B cell (primary cell): ENCODE measurements at regions of chr12 and their contacts with region 1.

Region 1: GRCh38 chr12:53500776-53501614 is at the start of gene TARBP2:
- DNase-seq: peak; percentile 99
- ATAC-seq: peak; percentile 79
- H3K4me3 ChIP-seq: peak within 1 kb of the TSS; percentile 65 to 94 (median 76)
- H3K4me3 Mint-ChIP-seq: peak within 1 kb of the TSS; percentile 92
- H3K27ac ChIP-seq: peak within 1 kb of the TSS; percentile 95 to 97
- H3K27ac Mint-ChIP-seq: peak within 1 kb of the TSS; percentile 97
- H3K4me1 ChIP-seq: peaks cover 22 to 28% of the 10 kb centered on the region in 2 donors
- H3K4me1 Mint-ChIP-seq: peaks cover 29% of the 10 kb centered on the region
- H3K27me3 ChIP-seq: no peaks in the 10 kb centered on the region
- H3K27me3 Mint-ChIP-seq: no peaks in the 10 kb centered on the region
- CTCF ChIP-seq: no peak
- total RNA-seq, gene TARBP2: 36.3 and 41.6 TPM in 2 replicates

Region 2: DNA sequence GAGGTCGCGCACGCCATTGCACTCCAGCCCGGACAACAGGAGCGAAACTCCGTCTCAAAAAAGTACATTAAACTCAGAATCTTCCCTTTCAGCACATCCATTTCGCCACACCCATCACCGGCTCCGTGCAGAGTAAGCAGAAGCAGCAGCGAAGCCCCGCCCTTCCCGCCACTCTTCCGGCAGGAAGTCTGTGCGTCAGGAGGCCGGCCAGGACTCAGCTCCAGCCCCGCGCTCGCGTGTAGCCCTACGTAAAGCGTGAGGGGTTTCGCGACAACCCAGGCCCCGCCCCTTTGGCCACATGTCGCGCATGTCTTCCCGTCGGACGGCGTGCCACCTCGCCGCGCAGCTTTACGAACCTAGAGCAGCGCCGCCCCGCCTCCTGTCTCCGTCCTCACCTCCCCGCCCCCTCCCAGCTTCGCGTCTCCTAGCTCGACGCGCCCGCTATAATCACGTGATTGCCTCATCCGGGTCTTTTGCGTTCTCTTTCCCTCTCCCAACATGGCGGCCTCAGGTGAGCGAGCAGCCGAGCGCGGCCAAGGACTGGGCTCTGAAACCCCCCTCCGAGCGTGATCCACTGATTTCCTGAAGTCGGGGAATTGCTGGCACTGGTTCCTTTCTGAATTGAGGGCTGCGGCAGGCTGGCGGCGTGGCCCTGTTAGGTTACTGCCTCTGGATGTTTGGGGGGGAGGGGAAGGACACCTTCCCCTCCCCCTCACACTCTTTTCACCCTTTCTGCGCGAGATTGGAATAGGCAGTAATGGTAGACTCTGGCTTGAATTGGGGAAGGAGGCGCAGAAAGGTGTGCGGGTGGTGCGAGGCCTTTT is 494.8 kb before region 1 on chr12 and contains the start of gene EIF4B:
- CTCF ChIA-PET with region 1: no interaction called
- POLR2A ChIA-PET with region 1: no interaction called
- intact Hi-C with region 1: loop called (anchors 1 kb)
- DNase-seq: peak; percentile 100
- ATAC-seq: peak; percentile 91
- H3K4me3 ChIP-seq: peak within 1 kb of the TSS; percentile 72 to 100 (median 82)
- H3K4me3 Mint-ChIP-seq: peak within 1 kb of the TSS; percentile 98
- H3K27ac ChIP-seq: peak within 1 kb of the TSS; percentile 79 to 92
- H3K27ac Mint-ChIP-seq: peak within 1 kb of the TSS; percentile 98
- H3K4me1 ChIP-seq: peaks cover 38 to 46% of the 10 kb centered on the region in 2 donors
- H3K4me1 Mint-ChIP-seq: peaks cover 44% of the 10 kb centered on the region
- H3K27me3 ChIP-seq: no peaks in the 10 kb centered on the region
- H3K27me3 Mint-ChIP-seq: no peaks in the 10 kb centered on the region
- CTCF ChIP-seq: no peak
- total RNA-seq, gene EIF4B: 631 and 674 TPM in 2 replicates

Region 3: DNA sequence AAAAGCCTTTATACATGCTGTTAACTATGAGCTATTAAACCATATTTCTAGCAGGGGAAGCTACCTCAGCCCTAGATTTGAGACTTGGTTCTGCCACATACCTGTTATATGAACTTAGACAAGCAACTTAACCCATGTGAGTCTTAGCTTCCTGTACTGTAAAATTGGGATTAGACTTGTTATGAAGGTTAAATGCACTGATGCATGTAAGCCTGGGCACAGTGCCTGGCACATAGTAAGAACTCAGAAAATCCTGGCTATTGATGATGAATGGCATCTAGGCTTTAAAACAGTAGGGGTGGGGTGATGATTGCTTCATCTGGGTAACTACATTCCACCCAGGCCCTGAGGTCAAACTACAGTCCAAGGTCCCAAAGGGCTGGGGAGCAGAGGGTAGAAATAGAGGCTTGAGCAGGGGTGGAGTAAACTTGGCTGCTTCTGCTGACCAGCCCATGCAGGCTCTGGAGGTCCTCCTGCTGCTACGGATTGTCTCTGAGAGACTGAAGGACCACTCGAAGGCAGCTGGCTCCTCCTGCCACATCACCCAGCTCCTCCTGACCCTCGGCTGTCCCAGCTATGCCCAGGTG is 221.6 kb before region 1 on chr12:
- CTCF ChIA-PET with region 1: no interaction called
- POLR2A ChIA-PET with region 1: no interaction called
- intact Hi-C with region 1: no loop called
- DNase-seq: no peak
- ATAC-seq: no peak
- H3K4me3 ChIP-seq: no peak overlapping the region
- H3K4me3 Mint-ChIP-seq: no peak overlapping the region
- H3K27ac ChIP-seq: no peak overlapping the region
- H3K27ac Mint-ChIP-seq: no peak overlapping the region
- H3K4me1 ChIP-seq: no peaks in the 10 kb centered on the region
- H3K4me1 Mint-ChIP-seq: no peaks in the 10 kb centered on the region
- H3K27me3 ChIP-seq: no peaks in the 10 kb centered on the region
- H3K27me3 Mint-ChIP-seq: no peaks in the 10 kb centered on the region
- CTCF ChIP-seq: no peak

Region 4: DNA sequence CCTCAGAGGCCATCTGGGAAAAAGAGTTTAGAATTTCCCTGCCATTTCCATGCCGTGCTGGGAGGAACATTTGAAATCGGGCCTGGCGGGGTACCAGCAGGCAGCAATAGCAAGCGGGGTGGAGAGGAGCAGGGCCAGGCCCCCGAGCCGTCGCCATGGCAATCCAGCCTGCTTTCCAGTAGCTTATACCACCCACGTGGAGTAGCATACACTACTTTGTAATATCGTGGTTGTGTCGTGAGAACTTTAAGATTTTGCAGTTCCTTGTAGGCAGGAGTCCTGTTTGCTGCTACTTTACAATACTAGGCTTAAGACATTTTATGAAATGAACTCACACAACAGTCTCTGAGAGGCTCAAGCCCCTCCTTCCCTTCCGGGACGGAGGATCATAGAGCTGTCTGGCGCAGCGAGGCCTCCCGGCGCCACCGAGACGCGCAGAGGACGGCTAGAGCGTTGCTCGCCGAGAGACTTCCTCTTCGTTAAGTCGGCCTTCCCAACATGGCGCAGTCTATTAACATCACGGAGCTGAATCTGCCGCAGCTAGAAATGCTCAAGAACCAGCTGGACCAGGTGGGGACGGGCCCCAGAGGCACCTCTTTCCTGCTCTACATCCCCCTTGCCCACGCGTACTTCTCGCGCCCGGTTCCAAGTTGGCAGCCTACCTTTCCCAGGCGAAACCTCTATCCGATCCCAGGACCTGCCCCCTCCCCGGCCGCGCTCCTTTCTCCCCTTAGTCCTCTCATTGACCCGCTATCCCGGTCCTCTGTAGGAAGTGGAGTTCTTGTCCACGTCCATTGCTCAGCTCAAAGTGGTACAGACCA is 205.7 kb before region 1 on chr12 and contains the start of gene PFDN5:
- CTCF ChIA-PET with region 1: no interaction called
- POLR2A ChIA-PET with region 1: no interaction called
- intact Hi-C with region 1: loop called (anchors 1 kb)
- DNase-seq: peak; percentile 92
- ATAC-seq: peak; percentile 90
- H3K4me3 ChIP-seq: peak within 1 kb of the TSS; percentile 64 to 96 (median 82)
- H3K4me3 Mint-ChIP-seq: peak within 1 kb of the TSS; percentile 100
- H3K27ac ChIP-seq: peak within 1 kb of the TSS; percentile 69 to 86
- H3K27ac Mint-ChIP-seq: peak within 1 kb of the TSS; percentile 99
- H3K4me1 ChIP-seq: peaks cover 26 to 39% of the 10 kb centered on the region in 2 donors
- H3K4me1 Mint-ChIP-seq: peaks cover 50% of the 10 kb centered on the region
- H3K27me3 ChIP-seq: no peaks in the 10 kb centered on the region
- H3K27me3 Mint-ChIP-seq: no peaks in the 10 kb centered on the region
- CTCF ChIP-seq: no peak
- total RNA-seq, gene PFDN5: 627 and 654 TPM in 2 replicates

Region 5: GRCh38 chr12:53379389-53380103 is 121.4 kb before region 1 on chr12:
- CTCF ChIA-PET with region 1: interaction called, 4 read pairs
- POLR2A ChIA-PET with region 1: interaction called, 15 read pairs
- intact Hi-C with region 1: loop called (anchors 1 kb)
- DNase-seq: peak; percentile 99
- ATAC-seq: peak; percentile 70
- H3K4me3 ChIP-seq: peak overlapping the region; percentile 60 to 93 (median 64)
- H3K4me3 Mint-ChIP-seq: no peak overlapping the region
- H3K27ac ChIP-seq: peak overlapping the region; percentile 76 to 89
- H3K27ac Mint-ChIP-seq: no peak overlapping the region
- H3K4me1 ChIP-seq: peaks cover 39 to 46% of the 10 kb centered on the region in 2 donors
- H3K4me1 Mint-ChIP-seq: peaks cover 33% of the 10 kb centered on the region
- H3K27me3 ChIP-seq: no peaks in the 10 kb centered on the region
- H3K27me3 Mint-ChIP-seq: no peaks in the 10 kb centered on the region
- CTCF ChIP-seq: no peak

Region 6: DNA sequence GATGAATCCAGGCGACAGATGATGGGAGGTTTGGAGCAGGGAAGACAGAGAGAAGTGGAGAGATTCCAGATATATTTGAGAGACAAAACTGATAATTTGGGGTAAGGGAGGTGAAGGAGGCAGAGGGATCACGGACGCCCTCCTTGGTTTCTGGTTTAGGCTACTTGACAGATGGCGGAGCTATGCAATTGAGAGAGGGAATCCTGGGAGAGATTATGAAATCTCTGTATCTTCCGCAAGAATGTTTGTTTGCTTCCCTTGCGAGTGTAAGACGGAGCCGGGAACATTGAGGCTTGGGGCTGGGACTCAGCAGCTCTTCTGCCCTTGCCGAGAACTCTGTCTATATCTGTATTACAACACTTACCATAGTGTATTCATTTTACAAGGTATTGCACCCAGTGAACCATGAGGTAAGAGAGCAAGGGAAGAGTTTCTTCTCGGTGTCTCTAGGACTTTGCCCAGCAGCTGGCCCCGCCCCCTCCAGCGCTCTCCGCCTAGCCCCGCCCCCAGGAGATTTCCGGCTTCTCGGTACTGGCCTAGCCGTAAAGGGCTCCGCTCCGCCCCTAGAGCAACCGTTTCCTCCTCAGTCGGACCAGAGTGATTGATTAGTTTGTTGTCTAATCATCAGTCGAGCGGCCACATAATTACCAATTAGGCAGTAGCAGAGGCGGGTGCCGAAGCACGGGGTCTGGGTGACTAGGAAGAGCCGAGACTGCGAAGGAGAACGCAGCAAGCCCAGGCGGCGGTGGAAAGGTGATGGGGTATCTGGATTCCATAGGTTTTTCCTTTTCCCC is 59.8 kb before region 1 on chr12 and contains the start of gene PRR13:
- CTCF ChIA-PET with region 1: no interaction called
- POLR2A ChIA-PET with region 1: interaction called, 4 read pairs
- intact Hi-C with region 1: loop called (anchors 1 kb)
- DNase-seq: peak; percentile 98
- ATAC-seq: peak; percentile 97
- H3K4me3 ChIP-seq: peak within 1 kb of the TSS; percentile 85 to 99 (median 94)
- H3K4me3 Mint-ChIP-seq: peak within 1 kb of the TSS; percentile 97
- H3K27ac ChIP-seq: peak within 1 kb of the TSS; percentile 62 to 93
- H3K27ac Mint-ChIP-seq: peak within 1 kb of the TSS; percentile 99
- H3K4me1 ChIP-seq: peaks cover 21 to 25% of the 10 kb centered on the region in 2 donors
- H3K4me1 Mint-ChIP-seq: peaks cover 40% of the 10 kb centered on the region
- H3K27me3 ChIP-seq: no peaks in the 10 kb centered on the region
- H3K27me3 Mint-ChIP-seq: no peaks in the 10 kb centered on the region
- CTCF ChIP-seq: no peak
- total RNA-seq, gene PRR13: 200 and 213 TPM in 2 replicates

Region 7: DNA sequence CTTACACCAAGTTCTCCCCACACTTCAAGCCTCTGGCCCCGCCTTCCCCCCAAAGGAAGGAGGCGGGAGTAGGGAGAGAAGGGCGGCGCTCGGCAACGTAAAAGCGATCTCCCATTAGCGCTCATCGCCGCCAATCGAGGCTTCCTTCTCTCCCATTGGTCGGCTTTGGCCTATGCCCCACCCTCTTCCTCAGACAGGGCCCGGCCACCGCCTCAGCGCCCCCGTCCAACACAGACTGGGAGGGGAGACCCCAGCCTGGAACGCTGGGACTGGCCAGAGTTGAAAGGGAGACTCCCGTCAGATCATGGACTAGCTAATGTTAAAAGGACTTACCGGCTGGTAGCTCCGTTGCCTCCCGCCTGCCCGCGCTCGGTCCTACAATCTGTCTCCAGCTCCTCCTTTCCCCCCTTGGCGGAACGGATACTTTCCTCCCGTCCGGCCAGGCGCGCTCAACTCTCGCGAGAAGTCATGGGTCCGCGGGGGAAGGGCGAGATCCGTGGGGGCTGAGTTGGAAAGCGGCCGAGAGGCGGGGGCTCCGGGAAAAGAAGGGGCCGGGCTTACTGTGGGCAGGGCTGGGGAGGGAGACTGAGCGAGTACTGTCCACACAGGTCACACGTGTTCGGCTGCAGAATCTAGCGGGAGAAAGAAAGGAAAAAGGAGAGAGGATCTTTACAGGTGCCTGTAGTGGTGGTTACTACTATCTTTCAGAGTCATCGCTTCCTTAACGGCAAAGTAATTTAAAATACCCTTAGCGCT is 125.1 kb after region 1 on chr12 and contains the start of gene ATF7:
- CTCF ChIA-PET with region 1: no interaction called
- POLR2A ChIA-PET with region 1: no interaction called
- intact Hi-C with region 1: loop called (anchors 2 kb)
- DNase-seq: peak; percentile 99
- ATAC-seq: peak; percentile 93
- H3K4me3 ChIP-seq: peak within 1 kb of the TSS; percentile 60 to 91 (median 74)
- H3K4me3 Mint-ChIP-seq: peak within 1 kb of the TSS; percentile 91
- H3K27ac ChIP-seq: peak within 1 kb of the TSS; percentile 77 to 88
- H3K27ac Mint-ChIP-seq: peak within 1 kb of the TSS; percentile 98
- H3K4me1 ChIP-seq: peaks cover 24 to 29% of the 10 kb centered on the region in 2 donors
- H3K4me1 Mint-ChIP-seq: peaks cover 46% of the 10 kb centered on the region
- H3K27me3 ChIP-seq: no peaks in the 10 kb centered on the region
- H3K27me3 Mint-ChIP-seq: no peaks in the 10 kb centered on the region
- CTCF ChIP-seq: no peak
- total RNA-seq, gene ATF7: 42.2 and 42.9 TPM in 2 replicates